Activated T-helper 1 cell treated with anti-CD3 and anti-CD28 coated beads, Interleukin-12 subunit alpha, Interleukin-12 subunit beta, Interleukin-2, Interleukin-4 antibody, amounts not matched to agents 30 ng/mL and 10 ng/mL and 1 ng/mL, durations not matched to agents 14 hours and 24 hours and 36 hours (primary cell): ENCODE measurements at regions of chr16 and their contacts with region 1.

Region 1: GRCh38 chr16:11797166-11797956 is at the start of gene ZC3H7A:
- DNase-seq: peak; percentile 95
- H3K4me3 Mint-ChIP-seq: peak within 1 kb of the TSS; percentile 92
- H3K27ac Mint-ChIP-seq: peak within 1 kb of the TSS; percentile 94
- H3K4me1 Mint-ChIP-seq: peaks cover 75% of the 10 kb centered on the region
- H3K27me3 Mint-ChIP-seq: no peaks in the 10 kb centered on the region
- total RNA-seq, gene ZC3H7A: 71.0 and 78.9 TPM in 2 replicates

Region 2: GRCh38 chr16:11560701-11561449 is 236.5 kb before region 1 on chr16:
- intact Hi-C with region 1: loop called (anchors 5 kb)
- DNase-seq: peak; percentile 66
- H3K4me3 Mint-ChIP-seq: peak overlapping the region; percentile 81
- H3K27ac Mint-ChIP-seq: peak overlapping the region; percentile 95
- H3K4me1 Mint-ChIP-seq: peaks cover 79% of the 10 kb centered on the region
- H3K27me3 Mint-ChIP-seq: no peaks in the 10 kb centered on the region

Region 3: GRCh38 chr16:11748404-11749254 is 48.7 kb before region 1 on chr16:
- intact Hi-C with region 1: no loop called
- DNase-seq: no peak
- H3K4me3 Mint-ChIP-seq: no peak overlapping the region
- H3K27ac Mint-ChIP-seq: peak overlapping the region; percentile 59
- H3K4me1 Mint-ChIP-seq: peaks cover 12% of the 10 kb centered on the region
- H3K27me3 Mint-ChIP-seq: no peaks in the 10 kb centered on the region

Region 4: DNA sequence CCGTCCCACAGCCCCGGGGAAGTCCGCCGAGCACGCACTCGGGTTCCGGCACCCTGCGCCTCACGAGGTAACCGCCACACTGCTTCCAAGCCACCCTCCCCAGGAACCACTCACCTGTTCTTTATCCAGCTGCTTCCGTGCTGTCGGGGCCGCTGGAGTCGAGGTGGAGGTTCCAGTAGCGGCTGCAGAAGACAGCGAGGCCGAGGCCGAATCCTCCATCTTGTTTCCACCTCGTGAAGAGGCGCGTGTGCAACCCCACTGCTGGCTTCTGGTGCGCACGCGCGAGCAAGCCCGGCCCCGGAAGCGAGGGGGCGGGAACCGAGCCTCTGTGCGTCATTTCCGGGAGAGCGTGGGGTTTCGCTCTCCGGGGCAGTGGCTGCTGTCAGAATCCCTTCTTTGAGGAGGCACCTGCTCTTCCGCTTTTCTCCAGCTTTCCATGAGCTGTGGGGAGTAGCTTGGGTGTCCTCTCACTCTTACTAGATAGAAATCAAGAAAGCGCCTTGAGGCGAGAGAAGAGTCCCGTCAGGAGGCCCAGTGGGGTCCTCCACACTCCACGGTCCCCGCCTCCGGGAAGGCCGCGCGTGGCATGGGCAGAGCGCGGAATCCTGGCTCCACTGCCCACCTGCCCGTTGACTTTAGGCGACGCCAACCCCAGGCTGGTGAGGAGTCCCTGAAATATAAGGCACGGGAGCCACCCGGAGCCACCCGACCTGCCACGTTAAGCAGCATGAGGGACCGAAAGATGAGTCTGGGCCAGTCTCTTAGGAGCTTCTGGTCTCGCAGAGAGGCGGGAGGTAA is 54.1 kb after region 1 on chr16 and contains the start of gene RSL1D1:
- intact Hi-C with region 1: loop called (anchors 1 kb)
- DNase-seq: peak; percentile 95
- H3K4me3 Mint-ChIP-seq: peak within 1 kb of the TSS; percentile 99
- H3K27ac Mint-ChIP-seq: peak within 1 kb of the TSS; percentile 97
- H3K4me1 Mint-ChIP-seq: peaks cover 44% of the 10 kb centered on the region
- H3K27me3 Mint-ChIP-seq: no peaks in the 10 kb centered on the region
- total RNA-seq, gene RSL1D1: 345 and 369 TPM in 2 replicates